Body of pancreas (tissue), 4 donors: ENCODE measurements at regions of chr17 and their contacts with region 1.

Region 1: GRCh38 chr17:18025945-18026776 is 12.8 kb downstream of the ATPAF2 start:
- DNase-seq: peak in 2 of 4 donors; percentile 38 to 41
- ATAC-seq: no peak
- H3K4me3 ChIP-seq: no peak overlapping the region
- H3K27ac ChIP-seq: no peak overlapping the region
- H3K4me1 ChIP-seq: no peaks in the 10 kb centered on the region
- H3K27me3 ChIP-seq: no peaks in the 10 kb centered on the region
- CTCF ChIP-seq: no peak
- POLR2A ChIP-seq: no peak

Region 2: GRCh38 chr17:17675925-17676534 is 350.1 kb before region 1 on chr17:
- intact Hi-C with region 1: loop called (anchors 10 kb)
- DNase-seq: no peak
- ATAC-seq: peak; percentile 31
- H3K4me3 ChIP-seq: no peak overlapping the region
- H3K27ac ChIP-seq: no peak overlapping the region
- H3K4me1 ChIP-seq: peaks cover 6% of the 10 kb centered on the region
- H3K27me3 ChIP-seq: no peaks in the 10 kb centered on the region
- CTCF ChIP-seq: no peak
- POLR2A ChIP-seq: no peak

Region 3: DNA sequence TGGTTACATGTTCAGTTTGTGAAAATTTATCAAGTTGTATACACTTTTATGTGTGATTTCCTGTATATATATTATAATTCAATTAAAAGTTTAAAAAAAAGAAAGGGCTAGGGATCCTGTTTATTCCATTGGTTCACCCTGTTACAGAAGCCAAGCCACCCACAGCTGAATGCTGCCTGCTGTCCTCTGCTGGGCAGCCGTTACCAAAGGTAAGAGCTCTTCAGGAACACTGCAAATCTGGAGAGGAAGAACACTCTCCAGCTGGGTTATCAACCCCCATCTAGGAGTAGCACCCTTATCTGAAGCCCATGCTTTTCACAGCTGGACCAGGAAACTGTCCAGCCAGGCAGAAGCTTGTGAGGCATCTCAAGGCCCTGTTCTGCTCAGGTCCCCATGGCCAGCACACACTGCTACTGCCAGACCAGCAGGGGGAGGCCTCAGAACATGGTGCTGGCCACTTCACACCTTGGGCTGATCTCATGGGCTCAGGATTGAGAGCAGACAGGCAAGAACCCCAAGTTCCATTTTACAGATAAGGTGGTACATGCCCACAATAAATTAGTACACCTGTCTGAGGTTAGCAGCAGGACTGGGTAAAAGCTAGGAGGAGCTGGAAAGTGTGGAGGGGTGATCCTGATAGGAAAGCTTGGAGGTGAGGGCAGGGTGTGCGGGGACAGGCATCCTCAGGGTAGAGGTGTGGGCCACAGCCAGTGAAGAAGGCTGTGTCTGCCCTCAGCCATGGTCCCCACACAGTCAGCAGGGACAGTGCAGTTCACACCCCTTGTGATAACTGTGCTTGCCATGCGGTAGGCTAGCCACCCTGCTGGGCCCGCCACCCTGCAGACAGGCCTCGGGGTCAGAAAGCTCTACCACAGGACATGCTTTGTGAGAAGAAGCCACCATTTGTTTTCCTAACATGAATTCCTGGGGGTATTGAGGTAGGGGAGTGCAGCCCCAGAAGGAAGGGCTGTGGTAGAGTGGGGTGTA is 135.1 kb before region 1 on chr17:
- intact Hi-C with region 1: loop called (anchors 10 kb)
- DNase-seq: peak; percentile 39 to 64 (median 57)
- ATAC-seq: peak; percentile 66
- H3K4me3 ChIP-seq: no peak overlapping the region
- H3K27ac ChIP-seq: no peak overlapping the region
- H3K4me1 ChIP-seq: no peaks in the 10 kb centered on the region
- H3K27me3 ChIP-seq: no peaks in the 10 kb centered on the region
- CTCF ChIP-seq: peak in 6 of 7 experiments; percentile 26 to 68 (median 54)
- POLR2A ChIP-seq: no peak

Region 4: DNA sequence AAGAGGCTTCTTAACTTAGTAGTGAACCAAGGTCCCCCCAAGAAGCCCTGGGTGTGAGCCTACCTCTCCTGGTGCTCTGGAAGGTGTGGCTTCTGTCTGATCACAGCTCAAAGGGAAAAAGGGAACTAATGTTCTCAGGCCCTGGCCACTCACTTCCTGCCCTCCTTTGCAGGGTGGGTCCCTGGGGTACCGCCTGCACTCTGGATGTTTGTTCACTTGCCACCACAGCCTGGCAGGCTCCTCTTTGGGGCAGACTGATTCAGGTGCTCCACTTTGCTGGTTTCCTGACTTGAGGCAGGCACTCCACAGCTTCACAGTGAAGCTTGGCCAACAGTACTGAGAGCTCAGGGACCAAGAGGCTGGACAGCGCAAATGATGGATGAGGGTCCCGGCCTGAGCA is 76.5 kb after region 1 on chr17:
- intact Hi-C with region 1: no loop called
- DNase-seq: no peak
- ATAC-seq: no peak
- H3K4me3 ChIP-seq: no peak overlapping the region
- H3K27ac ChIP-seq: no peak overlapping the region
- H3K4me1 ChIP-seq: no peaks in the 10 kb centered on the region
- H3K27me3 ChIP-seq: no peaks in the 10 kb centered on the region
- CTCF ChIP-seq: no peak
- POLR2A ChIP-seq: no peak

Region 5: DNA sequence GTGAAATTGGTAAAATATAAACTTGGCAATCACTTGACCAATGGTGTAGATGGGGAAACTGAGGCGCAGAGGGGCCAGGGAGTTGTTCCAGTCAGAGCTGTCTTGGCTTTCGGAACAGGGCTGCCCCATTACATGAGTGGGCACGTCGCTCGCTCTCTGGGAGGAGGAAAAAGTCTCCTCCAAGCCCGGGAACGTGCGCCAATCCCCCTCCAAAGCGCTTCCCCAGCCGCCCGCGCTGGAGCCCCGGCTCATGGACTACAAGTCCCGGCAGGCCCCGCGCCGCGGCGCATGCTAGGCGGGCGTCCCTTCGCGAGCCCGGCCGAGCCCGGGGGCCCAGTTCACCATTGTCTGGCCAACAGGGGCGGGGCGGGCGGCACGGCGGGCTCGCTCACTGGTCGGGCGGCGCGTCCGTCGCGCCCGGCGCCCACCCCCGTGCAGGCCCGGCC is 199.0 kb after region 1 on chr17:
- intact Hi-C with region 1: no loop called
- DNase-seq: peak; percentile 96 to 97 (median 97)
- ATAC-seq: peak; percentile 99
- H3K4me3 ChIP-seq: no peak overlapping the region
- H3K27ac ChIP-seq: peak overlapping the region in 1 of 4 donors; percentile 27
- H3K4me1 ChIP-seq: peaks cover 14% of the 10 kb centered on the region
- H3K27me3 ChIP-seq: no peaks in the 10 kb centered on the region
- CTCF ChIP-seq: no peak
- POLR2A ChIP-seq: no peak